Cardiac septum (tissue), 1 donor: ENCODE measurements at regions of chr9 and their contacts with region 1.

Region 1: GRCh38 chr9:128361986-128362646 is 9.1 kb upstream of the URM1 start:
- DNase-seq: peak; percentile 91

Region 2: GRCh38 chr9:128412120-128412790 is 50.1 kb after region 1 on chr9:
- intact Hi-C with region 1: loop called (anchors 2 kb)
- DNase-seq: no peak